Common myeloid progenitor, CD34-positive (primary cell): ENCODE measurements at regions of chr5 and their contacts with region 1.

Region 1: DNA sequence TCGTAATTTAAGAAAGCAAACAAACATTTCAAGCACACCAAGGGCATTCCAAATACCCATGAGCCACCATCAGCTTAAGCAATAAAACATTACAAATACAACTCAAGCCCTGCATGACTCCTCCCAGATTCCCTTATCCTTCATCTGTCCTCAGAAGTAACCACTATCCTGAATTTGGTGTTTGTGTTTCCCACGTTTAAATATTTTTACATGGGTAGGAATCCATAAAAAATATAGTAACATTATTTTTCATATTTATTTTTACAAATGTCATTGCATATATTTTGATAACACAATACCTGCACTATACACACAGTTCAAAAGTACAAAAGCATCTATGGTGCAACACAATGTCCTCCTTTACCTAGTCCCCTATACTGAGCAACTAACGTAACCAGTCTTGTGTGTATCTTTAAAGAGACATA is 6.4 kb downstream of the PRKAA1 start:
- DNase-seq: no peak
- H3K4me3 ChIP-seq: peak overlapping the region in 1 of 7 experiments; percentile 13
- H3K27ac ChIP-seq: no peak overlapping the region
- H3K4me1 ChIP-seq: peaks cover 5 to 29% (median 12%) of the 10 kb centered on the region in 4 experiments
- H3K27me3 ChIP-seq: no peaks in the 10 kb centered on the region

Region 2: DNA sequence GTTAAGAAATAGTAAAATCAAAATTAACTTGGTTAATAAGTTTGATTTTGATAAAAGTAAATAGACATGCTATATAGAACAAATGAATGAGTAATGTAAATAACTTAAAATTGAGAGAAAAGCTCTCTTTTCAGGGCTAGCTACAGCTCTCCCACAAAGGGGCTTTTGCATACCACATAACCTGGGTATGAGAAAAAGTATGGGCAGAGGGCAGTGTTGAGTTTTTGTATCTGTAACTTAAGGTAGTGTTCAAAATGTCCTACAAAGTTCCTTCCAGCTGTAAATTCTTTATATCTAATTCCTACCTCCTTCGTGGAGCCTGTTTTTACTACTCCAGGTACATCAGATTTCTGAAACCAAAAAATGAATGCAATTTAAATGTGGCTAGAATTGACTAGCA is 17.1 kb before region 1 on chr5:
- CTCF ChIA-PET with region 1: interaction called, 17 read pairs
- POLR2A ChIA-PET with region 1: interaction called, 3 read pairs
- DNase-seq: peak; percentile 21 to 57 (median 51)
- H3K4me3 ChIP-seq: no peak overlapping the region
- H3K27ac ChIP-seq: no peak overlapping the region
- H3K4me1 ChIP-seq: peaks cover 0 to 12% (median 5%) of the 10 kb centered on the region in 4 experiments
- H3K27me3 ChIP-seq: no peaks in the 10 kb centered on the region

Region 3: GRCh38 chr5:40813698-40814281 is 22.1 kb after region 1 on chr5:
- CTCF ChIA-PET with region 1: no interaction called
- POLR2A ChIA-PET with region 1: no interaction called
- DNase-seq: no peak
- H3K4me3 ChIP-seq: no peak overlapping the region
- H3K27ac ChIP-seq: no peak overlapping the region
- H3K4me1 ChIP-seq: no peaks in the 10 kb centered on the region
- H3K27me3 ChIP-seq: no peaks in the 10 kb centered on the region

Region 4: DNA sequence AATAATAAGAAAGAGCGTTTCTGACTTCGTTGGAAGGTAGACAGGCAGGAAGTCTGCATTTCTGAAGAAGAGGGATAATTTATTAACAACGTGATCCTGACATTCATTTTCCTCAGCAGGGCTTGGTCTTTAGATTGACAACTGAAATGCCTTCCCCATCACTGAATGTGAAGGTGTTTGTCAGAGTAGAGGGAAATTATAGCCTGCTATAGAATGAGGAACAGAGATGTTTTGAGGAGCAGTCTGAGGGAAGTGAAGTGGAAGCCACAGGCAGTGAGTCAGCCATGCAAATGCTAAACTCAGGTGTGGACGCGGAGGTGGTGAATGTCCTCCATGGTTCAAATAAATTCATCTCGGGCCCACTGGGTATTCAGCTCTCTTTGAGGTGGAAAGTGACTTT is 148.0 kb after region 1 on chr5:
- CTCF ChIA-PET with region 1: no interaction called
- POLR2A ChIA-PET with region 1: no interaction called
- DNase-seq: no peak
- H3K4me3 ChIP-seq: no peak overlapping the region
- H3K27ac ChIP-seq: no peak overlapping the region
- H3K4me1 ChIP-seq: no peaks in the 10 kb centered on the region
- H3K27me3 ChIP-seq: no peaks in the 10 kb centered on the region